Colonic mucosa (tissue), 4 donors: ENCODE measurements at regions of chr1 and their contacts with region 1.

Region 1: DNA sequence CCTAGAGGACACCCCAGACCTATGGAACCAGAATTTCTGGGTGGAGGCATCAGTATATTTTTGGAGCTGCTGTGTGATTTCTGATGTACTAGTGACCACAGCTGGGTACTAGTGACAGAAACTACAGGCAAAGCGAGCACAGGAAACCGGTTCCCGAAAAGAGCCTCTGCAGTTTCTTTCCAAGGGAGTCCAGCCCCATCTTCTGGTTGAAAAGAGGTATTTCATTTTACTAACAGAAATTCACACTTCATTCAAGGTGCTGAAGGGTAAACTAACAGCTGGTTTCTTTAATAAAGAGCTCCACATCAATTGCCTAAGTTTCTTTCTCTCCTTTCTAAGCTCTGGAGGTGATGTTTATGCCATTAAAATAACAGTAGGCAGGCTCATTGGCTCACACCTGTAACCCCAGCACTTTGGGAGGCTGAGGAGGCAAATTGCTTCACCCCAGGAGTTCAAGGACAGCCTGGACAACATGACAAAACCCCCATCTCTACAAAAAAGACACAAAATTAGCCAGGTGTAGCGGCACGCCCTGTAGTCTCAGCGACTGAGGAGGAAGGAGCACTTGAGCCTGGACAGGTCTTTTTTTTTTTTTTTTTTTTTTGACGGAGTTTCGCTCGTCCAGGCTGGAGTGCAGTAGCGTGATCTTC is 22.0 kb downstream of the THAP3 start:
- DNase-seq: no peak
- H3K4me3 ChIP-seq: no peak overlapping the region
- H3K27ac ChIP-seq: no peak overlapping the region
- H3K4me1 ChIP-seq: no peaks in the 10 kb centered on the region
- H3K27me3 ChIP-seq: no peaks in the 10 kb centered on the region
- CTCF ChIP-seq: peak; percentile 38

Region 2: GRCh38 chr1:6489799-6490180 is 156.8 kb before region 1 on chr1:
- intact Hi-C with region 1: loop called (anchors 5 kb)
- DNase-seq: peak; percentile 83
- H3K4me3 ChIP-seq: peak overlapping the region; percentile 81
- H3K27ac ChIP-seq: peak overlapping the region; percentile 67
- H3K4me1 ChIP-seq: peaks cover 6% of the 10 kb centered on the region
- H3K27me3 ChIP-seq: no peaks in the 10 kb centered on the region
- CTCF ChIP-seq: peak; percentile 98

Region 3: GRCh38 chr1:6602669-6603237 is 43.9 kb before region 1 on chr1 and contains the start of gene KLHL21:
- intact Hi-C with region 1: no loop called
- DNase-seq: peak; percentile 82
- H3K4me3 ChIP-seq: peak within 1 kb of the TSS; percentile 94
- H3K27ac ChIP-seq: peak within 1 kb of the TSS; percentile 94
- H3K4me1 ChIP-seq: peaks cover 5% of the 10 kb centered on the region
- H3K27me3 ChIP-seq: no peaks in the 10 kb centered on the region
- CTCF ChIP-seq: no peak
- total RNA-seq, gene KLHL21: 9.4 TPM

Region 4: DNA sequence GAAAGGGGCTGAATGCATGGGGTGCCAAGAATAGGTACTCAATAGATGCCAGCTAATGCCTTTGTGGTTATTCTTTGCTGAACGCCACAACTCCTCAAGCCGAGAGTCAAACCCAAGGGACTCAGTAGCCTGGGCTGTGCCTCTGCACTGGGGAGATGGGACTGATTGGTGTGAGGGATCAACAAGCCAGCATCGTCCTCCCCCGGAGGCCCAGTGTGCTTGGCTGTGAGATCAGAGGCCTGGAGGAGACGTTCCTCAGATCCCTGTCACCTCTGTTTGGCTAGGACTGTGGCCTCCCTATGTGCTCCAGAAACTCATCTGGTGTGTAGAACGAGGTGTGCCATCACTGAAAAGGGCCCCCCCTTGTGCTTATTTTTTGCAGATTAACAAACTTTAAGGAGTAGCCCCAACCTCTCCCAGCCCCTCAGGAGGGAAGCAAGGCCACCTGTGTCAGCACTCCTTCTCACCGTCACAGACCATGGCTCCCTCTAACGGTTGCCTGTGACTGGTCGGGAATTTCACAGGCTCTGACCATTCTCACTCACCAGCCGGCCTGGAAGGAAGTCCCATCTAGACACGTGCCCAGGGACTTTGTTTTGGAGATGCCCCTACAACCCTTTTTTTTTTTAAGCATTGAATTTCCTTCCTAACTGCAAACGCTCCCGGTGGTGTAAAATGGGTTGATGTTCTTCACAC is 930.5 kb after region 1 on chr1:
- intact Hi-C with region 1: no loop called
- DNase-seq: no peak
- H3K4me3 ChIP-seq: no peak overlapping the region
- H3K27ac ChIP-seq: no peak overlapping the region
- H3K4me1 ChIP-seq: no peaks in the 10 kb centered on the region
- H3K27me3 ChIP-seq: no peaks in the 10 kb centered on the region
- CTCF ChIP-seq: no peak